Left ventricle myocardium superior (tissue), 1 donor: ENCODE measurements at regions of chr2 and their contacts with region 1.

Region 1: DNA sequence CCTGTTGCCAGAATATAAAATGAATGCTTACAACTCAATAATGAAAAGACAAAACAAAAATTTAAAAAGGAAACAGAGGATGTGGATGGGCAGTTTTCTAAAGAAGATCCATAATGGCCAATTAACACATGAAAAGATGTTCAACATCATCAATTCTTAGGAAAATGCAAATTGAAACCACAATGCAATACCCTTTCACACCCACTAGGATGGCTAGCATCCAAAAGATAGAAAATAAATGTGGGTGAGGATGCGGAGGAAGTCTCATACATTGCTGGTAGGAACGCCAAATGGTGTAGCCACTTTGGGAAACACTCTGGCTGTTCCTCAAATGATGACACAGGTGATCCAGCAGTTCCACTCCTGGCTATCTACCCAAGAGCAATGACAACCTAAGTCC is 130.5 kb downstream of the TNS1 start:
- DNase-seq: no peak
- ATAC-seq: no peak

Region 2: GRCh38 chr2:217804786-217805667 is 67.3 kb before region 1 on chr2:
- intact Hi-C with region 1: loop called (anchors 5 kb)
- DNase-seq: no peak
- ATAC-seq: peak; percentile 35